ENCODE measurements at regions of chr1 and their contacts with region 1.

Region 1: DNA sequence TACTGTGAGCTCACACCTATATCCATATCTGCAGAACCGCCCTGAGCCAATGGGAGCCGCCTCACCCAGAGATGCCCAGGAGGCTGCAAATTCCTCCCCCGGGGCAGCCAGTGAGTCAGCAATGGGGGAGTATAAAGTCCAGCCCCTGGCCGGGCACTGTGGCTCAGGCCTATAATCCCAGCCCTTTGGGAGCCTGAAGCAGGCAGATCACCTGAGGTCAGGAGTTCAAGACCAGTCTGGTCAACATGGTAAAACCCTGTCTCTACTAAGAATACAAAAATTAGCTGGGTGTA is 5.0 kb upstream of the CLCNKB start:
- DNase-seq: no peak
- ATAC-seq: no peak
- H3K4me3 ChIP-seq: no peak overlapping the region
- H3K4me3 Mint-ChIP-seq: no peak overlapping the region
- H3K27ac ChIP-seq: no peak overlapping the region
- H3K27ac Mint-ChIP-seq: no peak overlapping the region
- H3K4me1 ChIP-seq: no peaks in the 10 kb centered on the region
- H3K4me1 Mint-ChIP-seq: no peaks in the 10 kb centered on the region
- H3K27me3 ChIP-seq: no peaks in the 10 kb centered on the region
- H3K27me3 Mint-ChIP-seq: peaks cover 2% of the 10 kb centered on the region
- CTCF ChIP-seq: no peak

Region 2: GRCh38 chr1:15966081-15966955 is 72.2 kb before region 1 on chr1:
- CTCF ChIA-PET with region 1: no interaction called
- POLR2A ChIA-PET with region 1: no interaction called
- intact Hi-C with region 1: no loop called
- DNase-seq: peak in 7 of 9 experiments; percentile 21 to 77 (median 52)
- ATAC-seq: peak; percentile 79
- H3K4me3 ChIP-seq: peak overlapping the region; percentile 20 to 22
- H3K4me3 Mint-ChIP-seq: peak overlapping the region; percentile 72
- H3K27ac ChIP-seq: peak overlapping the region in 1 of 2 experiments; percentile 66
- H3K27ac Mint-ChIP-seq: peak overlapping the region; percentile 89
- H3K4me1 ChIP-seq: peaks cover 35% of the 10 kb centered on the region
- H3K4me1 Mint-ChIP-seq: peaks cover 45% of the 10 kb centered on the region
- H3K27me3 ChIP-seq: no peaks in the 10 kb centered on the region
- H3K27me3 Mint-ChIP-seq: no peaks in the 10 kb centered on the region
- CTCF ChIP-seq: no peak

Region 3: GRCh38 chr1:16067127-16067768 is 28.7 kb after region 1 on chr1:
- CTCF ChIA-PET with region 1: no interaction called
- POLR2A ChIA-PET with region 1: no interaction called
- intact Hi-C with region 1: loop called in 1 of 2 experiments (anchors 1 kb)
- DNase-seq: no peak
- ATAC-seq: no peak
- H3K4me3 ChIP-seq: no peak overlapping the region
- H3K4me3 Mint-ChIP-seq: no peak overlapping the region
- H3K27ac ChIP-seq: no peak overlapping the region
- H3K27ac Mint-ChIP-seq: no peak overlapping the region
- H3K4me1 ChIP-seq: peaks cover 6% of the 10 kb centered on the region
- H3K4me1 Mint-ChIP-seq: peaks cover 14% of the 10 kb centered on the region
- H3K27me3 ChIP-seq: peaks cover 2% of the 10 kb centered on the region in 2 experiments
- H3K27me3 Mint-ChIP-seq: peaks cover 7% of the 10 kb centered on the region
- CTCF ChIP-seq: no peak